ENCODE measurements at regions of chr21 and their contacts with region 1.

Region 1: DNA sequence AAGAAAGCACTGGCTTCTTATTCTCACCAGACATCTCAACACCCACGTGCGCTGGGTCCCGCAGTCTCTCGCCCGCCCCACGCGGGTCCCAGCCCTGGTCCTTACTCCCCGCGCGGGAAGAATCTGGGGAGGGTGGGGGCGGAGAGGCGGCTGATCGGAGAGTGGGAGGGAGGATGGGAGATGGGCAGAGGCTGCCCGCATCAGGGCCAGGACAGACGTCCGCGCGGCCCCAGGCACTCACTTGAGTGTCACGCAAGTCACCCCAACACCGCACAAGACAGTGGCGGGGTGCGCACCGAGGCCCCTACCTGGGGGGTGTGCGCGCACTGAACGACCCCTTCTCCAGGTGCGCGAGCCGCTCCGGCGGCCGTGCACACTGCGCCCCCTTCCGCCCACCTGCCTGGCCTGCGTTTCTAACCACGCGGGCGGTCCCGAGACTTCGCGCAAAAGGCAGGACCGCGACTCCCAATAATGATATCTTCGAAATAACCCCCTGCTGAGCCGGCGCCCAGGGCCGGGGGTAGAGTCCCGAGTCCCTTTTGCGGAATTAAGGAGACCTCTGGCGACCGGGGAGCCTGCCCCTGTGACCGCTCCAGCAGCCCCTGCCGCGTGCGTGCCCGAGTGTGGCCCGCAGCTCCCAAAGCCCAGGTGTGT is 6.0 kb upstream of the SIM2 start:
- DNase-seq: no peak
- H3K4me3 Mint-ChIP-seq: no peak overlapping the region
- H3K27ac Mint-ChIP-seq: no peak overlapping the region
- H3K4me1 Mint-ChIP-seq: peaks cover 16% of the 10 kb centered on the region
- H3K27me3 Mint-ChIP-seq: peaks cover 81% of the 10 kb centered on the region

Region 2: GRCh38 chr21:36706951-36707762 is 14.2 kb after region 1 on chr21:
- CTCF ChIA-PET with region 1: interaction called, 3 read pairs
- POLR2A ChIA-PET with region 1: no interaction called
- intact Hi-C with region 1: loop called (anchors 2 kb)
- DNase-seq: peak; percentile 24
- H3K4me3 Mint-ChIP-seq: no peak overlapping the region
- H3K27ac Mint-ChIP-seq: no peak overlapping the region
- H3K4me1 Mint-ChIP-seq: peaks cover 39% of the 10 kb centered on the region
- H3K27me3 Mint-ChIP-seq: peaks cover 73% of the 10 kb centered on the region

Region 3: GRCh38 chr21:36806103-36806502 is 113.1 kb after region 1 on chr21:
- CTCF ChIA-PET with region 1: no interaction called
- POLR2A ChIA-PET with region 1: no interaction called
- intact Hi-C with region 1: no loop called
- DNase-seq: no peak
- H3K4me3 Mint-ChIP-seq: no peak overlapping the region
- H3K27ac Mint-ChIP-seq: no peak overlapping the region
- H3K4me1 Mint-ChIP-seq: no peaks in the 10 kb centered on the region
- H3K27me3 Mint-ChIP-seq: no peaks in the 10 kb centered on the region

Region 4: DNA sequence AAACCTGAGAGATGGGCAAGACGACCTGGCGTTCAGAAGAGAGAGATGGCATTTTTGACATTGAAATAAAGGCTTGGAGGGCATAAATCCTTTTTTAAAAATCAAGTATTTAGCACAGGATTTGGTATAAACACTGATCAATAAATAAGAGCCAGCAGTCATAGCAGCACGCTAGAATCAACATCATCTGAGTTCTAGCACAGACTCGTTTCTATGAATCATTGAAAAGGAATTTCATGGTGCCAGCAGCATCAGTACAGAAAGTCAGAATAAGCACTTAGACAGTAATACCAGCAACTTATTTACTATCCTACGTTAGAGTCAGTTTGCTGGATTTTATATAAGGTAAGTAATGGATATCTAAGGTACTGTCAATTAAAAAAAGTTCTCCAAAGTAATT is 154.2 kb after region 1 on chr21:
- CTCF ChIA-PET with region 1: no interaction called
- POLR2A ChIA-PET with region 1: no interaction called
- intact Hi-C with region 1: no loop called
- DNase-seq: no peak
- H3K4me3 Mint-ChIP-seq: no peak overlapping the region
- H3K27ac Mint-ChIP-seq: no peak overlapping the region
- H3K4me1 Mint-ChIP-seq: no peaks in the 10 kb centered on the region
- H3K27me3 Mint-ChIP-seq: no peaks in the 10 kb centered on the region

Measured in activated CD4-positive, alpha-beta memory T cell treated with anti-CD3 and anti-CD28 coated beads for 36 hours (primary cell).